ENCODE measurements at regions of chr9 and their contacts with region 1.

Region 1: GRCh38 chr9:130847327-130848217 is 12.5 kb downstream of the ABL1 start:
- DNase-seq: peak; percentile 96
- H3K4me3 ChIP-seq: peak overlapping the region in 1 of 3 experiments; percentile 56
- H3K27ac ChIP-seq: peak overlapping the region; percentile 95
- H3K4me1 ChIP-seq: peaks cover 58% of the 10 kb centered on the region
- H3K27me3 ChIP-seq: no peaks in the 10 kb centered on the region
- CTCF ChIP-seq: peak in 1 of 2 donors; percentile 4
- POLR2A ChIP-seq: peak; percentile 55

Region 2: GRCh38 chr9:130451509-130452388 is 395.8 kb before region 1 on chr9:
- CTCF ChIA-PET with region 1: no interaction called
- POLR2A ChIA-PET with region 1: no interaction called
- dilution Hi-C with region 1: no loop called
- intact Hi-C with region 1: loop called (anchors 5 kb)
- DNase-seq: peak; percentile 93
- H3K4me3 ChIP-seq: no peak overlapping the region
- H3K27ac ChIP-seq: no peak overlapping the region
- H3K4me1 ChIP-seq: peaks cover 30% of the 10 kb centered on the region
- H3K27me3 ChIP-seq: peaks cover 0 to 2% of the 10 kb centered on the region in 2 experiments
- CTCF ChIP-seq: peak; percentile 58 to 74
- POLR2A ChIP-seq: no peak

Region 3: DNA sequence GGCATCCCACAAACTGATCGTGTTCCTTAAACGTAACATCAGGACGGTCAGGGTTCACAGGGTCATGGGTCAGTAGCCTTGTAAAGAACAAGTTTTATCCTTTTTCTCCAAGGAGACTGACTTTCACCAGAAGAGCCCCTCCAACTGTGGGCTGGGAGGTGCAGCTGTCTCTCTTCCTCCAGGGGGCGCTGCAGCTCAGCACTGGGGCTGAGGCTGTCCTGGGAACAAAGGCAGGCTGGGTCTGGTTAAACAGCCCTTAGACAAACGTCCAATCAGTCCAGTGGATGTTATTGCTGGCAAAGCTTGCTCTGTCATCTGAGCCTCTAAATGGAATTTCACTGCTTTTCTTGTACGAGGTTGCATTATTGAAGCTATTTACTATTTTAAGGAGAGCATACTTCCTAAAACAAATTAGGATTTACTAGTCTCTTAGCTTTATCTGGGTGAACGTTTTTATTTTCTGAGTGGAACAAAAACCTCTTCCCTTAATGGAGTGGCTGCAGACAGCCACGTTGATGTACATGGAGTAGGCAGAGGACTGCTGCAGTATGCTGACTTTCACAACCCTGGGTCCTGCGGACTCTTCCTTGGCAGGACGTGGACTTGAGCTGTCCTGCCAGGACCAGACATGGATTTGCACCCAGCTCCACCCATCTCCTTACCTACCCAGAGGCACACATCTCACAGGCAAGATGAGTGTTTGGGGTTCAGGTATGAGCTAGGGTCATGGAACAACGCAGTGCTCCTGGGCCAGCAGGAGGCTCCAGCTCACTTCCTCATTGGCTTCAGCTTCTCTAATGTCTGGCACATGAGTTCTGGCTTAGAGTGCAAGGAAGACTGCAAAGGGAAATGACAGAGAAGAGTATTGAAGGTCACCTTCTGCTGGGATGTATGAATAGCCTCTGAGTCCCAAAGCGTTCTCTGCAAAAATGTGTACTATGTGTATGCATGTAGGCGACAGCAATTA is 146.2 kb before region 1 on chr9:
- CTCF ChIA-PET with region 1: interaction called, 13 read pairs
- POLR2A ChIA-PET with region 1: no interaction called
- dilution Hi-C with region 1: loop called (anchors 25 kb)
- intact Hi-C with region 1: no loop called
- DNase-seq: peak; percentile 84
- H3K4me3 ChIP-seq: no peak overlapping the region
- H3K27ac ChIP-seq: no peak overlapping the region
- H3K4me1 ChIP-seq: peaks cover 2% of the 10 kb centered on the region
- H3K27me3 ChIP-seq: no peaks in the 10 kb centered on the region
- CTCF ChIP-seq: peak; percentile 97 to 99
- POLR2A ChIP-seq: no peak

Region 4: GRCh38 chr9:130770679-130771442 is 76.7 kb before region 1 on chr9:
- CTCF ChIA-PET with region 1: interaction called, 13 read pairs
- POLR2A ChIA-PET with region 1: no interaction called
- dilution Hi-C with region 1: no loop called
- intact Hi-C with region 1: loop called (anchors 5 kb)
- DNase-seq: peak; percentile 81
- H3K4me3 ChIP-seq: no peak overlapping the region
- H3K27ac ChIP-seq: no peak overlapping the region
- H3K4me1 ChIP-seq: peaks cover 27% of the 10 kb centered on the region
- H3K27me3 ChIP-seq: no peaks in the 10 kb centered on the region
- CTCF ChIP-seq: peak; percentile 30 to 47
- POLR2A ChIP-seq: no peak

Region 5: DNA sequence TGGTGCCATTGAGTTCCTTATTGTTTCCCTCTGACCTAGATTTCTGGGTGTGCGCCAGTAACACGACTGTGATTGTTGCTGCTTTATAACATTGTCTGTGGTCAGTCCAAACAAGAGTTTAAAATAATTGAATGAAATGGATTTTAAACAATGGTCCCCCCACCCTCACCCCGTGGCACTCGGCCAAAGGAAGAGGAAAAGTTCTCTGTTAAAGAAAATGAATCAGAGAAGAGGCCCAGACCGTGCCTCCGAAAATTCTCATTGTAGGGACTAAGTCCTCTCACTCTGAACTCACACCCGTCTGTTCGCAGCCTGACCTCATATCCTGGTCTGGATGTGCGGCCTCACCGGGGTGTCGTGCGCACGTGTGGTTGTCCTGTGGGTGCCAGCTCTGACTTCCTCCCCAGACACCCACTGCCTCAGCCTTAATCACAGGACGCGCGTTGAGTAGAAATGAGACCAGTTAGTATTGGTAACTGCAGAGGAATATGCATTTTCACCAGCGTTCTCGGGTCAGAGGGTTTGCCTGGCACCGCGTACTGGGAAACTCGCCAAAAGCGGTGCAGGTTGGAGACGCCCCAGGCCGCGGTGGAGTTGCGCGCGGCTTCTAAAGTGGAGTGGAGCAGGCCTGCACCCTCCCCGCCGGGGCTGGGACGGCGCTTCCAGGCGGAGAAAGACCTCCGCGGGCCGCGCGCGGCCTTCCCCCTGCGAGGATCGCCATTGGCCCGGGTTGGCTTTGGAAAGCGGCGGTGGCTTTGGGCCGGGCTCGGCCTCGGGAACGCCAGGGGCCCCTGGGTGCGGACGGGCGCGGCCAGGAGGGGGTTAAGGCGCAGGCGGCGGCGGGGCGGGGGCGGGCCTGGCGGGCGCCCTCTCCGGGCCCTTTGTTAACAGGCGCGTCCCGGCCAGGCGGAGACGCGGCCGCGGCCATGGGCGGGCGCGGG is 12.9 kb before region 1 on chr9 and contains the start of gene ABL1:
- CTCF ChIA-PET with region 1: interaction called, 16 read pairs
- POLR2A ChIA-PET with region 1: interaction called, 6 read pairs
- dilution Hi-C with region 1: no loop called
- intact Hi-C with region 1: loop called (anchors 1 kb)
- DNase-seq: peak; percentile 88
- H3K4me3 ChIP-seq: peak within 1 kb of the TSS; percentile 85 to 92 (median 89)
- H3K27ac ChIP-seq: peak within 1 kb of the TSS; percentile 85
- H3K4me1 ChIP-seq: peaks cover 47% of the 10 kb centered on the region
- H3K27me3 ChIP-seq: no peaks in the 10 kb centered on the region
- CTCF ChIP-seq: no peak
- POLR2A ChIP-seq: peak; percentile 60
- total RNA-seq, gene ABL1: 79.2 and 87.1 TPM in 2 replicates